ENCODE measurements at regions of chr10 and their contacts with region 1.

Region 1: GRCh38 chr10:102927311-102928010 is 9.4 kb downstream of the CNNM2 start:
- DNase-seq: no peak
- CTCF ChIP-seq: no peak

Region 2: GRCh38 chr10:103053659-103054581 is 126.5 kb after region 1 on chr10:
- in situ Hi-C with region 1: loop called (anchors 10 kb)
- DNase-seq: peak; percentile 70
- CTCF ChIP-seq: peak; percentile 71

Region 3: GRCh38 chr10:103244663-103245271 is 317.3 kb after region 1 on chr10:
- in situ Hi-C with region 1: loop called (anchors 10 kb)
- DNase-seq: peak; percentile 88
- CTCF ChIP-seq: peak; percentile 93

Measured in GM13977 (cell line).